ENCODE measurements at regions of chr3 and their contacts with region 1.

Region 1: DNA sequence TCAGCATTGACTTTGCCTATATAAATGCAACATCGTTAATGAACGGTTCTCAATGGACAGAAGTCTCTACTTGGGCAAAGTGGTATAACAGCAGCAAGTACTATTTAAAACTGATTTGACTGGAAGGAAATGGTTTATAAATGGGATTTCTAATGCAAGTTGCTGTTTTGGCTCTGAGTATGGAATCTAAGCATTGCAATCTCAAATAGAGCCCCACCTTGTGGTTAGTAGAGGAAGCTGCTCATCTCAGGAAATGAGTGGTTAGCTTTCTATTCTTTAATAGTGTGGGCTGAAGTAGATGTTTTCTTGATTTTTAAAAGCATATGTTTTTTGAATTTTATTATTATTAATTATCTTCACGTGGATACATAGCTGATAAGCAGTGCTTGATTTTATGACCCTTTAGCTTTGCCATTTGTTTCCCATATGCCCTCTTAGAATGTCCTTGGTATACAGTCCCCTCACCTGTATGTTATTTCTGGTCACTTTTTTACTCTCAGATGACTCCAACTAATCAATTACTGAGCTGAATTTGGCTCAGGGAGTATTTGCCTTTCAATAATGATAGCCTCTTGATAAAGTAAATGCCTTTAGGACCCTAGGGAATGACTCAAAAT is 67.1 kb downstream of the OXSM start:
- DNase-seq: no peak
- ATAC-seq: peak; percentile 76
- H3K4me3 Mint-ChIP-seq: no peak overlapping the region
- H3K27ac Mint-ChIP-seq: no peak overlapping the region
- H3K4me1 Mint-ChIP-seq: peaks cover 8% of the 10 kb centered on the region
- H3K27me3 Mint-ChIP-seq: peaks cover 9% of the 10 kb centered on the region

Region 2: GRCh38 chr3:25573386-25574171 is 283.4 kb before region 1 on chr3:
- CTCF ChIA-PET with region 1: no interaction called
- DNase-seq: no peak
- ATAC-seq: no peak
- H3K4me3 Mint-ChIP-seq: no peak overlapping the region
- H3K27ac Mint-ChIP-seq: no peak overlapping the region
- H3K4me1 Mint-ChIP-seq: no peaks in the 10 kb centered on the region
- H3K27me3 Mint-ChIP-seq: peaks cover 3% of the 10 kb centered on the region

Region 3: DNA sequence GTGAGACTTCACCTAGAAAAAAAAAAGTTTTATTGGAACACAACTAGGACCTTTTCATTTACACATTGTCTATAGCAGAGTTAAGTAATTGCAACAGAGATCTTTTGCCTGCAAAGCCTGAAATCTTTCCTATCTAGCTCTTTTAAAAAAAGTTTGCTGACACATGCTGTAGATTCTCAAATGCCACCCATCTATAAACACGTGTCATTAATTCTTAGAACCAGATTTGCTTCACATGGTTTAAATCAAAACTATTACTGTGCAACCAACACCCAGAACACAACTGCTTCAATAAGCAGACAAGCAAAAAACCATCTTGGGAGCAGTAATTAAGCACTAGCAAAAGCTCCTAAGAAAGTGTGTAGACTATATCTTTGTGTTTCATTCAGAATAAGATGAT is 12.1 kb before region 1 on chr3:
- CTCF ChIA-PET with region 1: interaction called, 11 read pairs
- DNase-seq: no peak
- ATAC-seq: no peak
- H3K4me3 Mint-ChIP-seq: no peak overlapping the region
- H3K27ac Mint-ChIP-seq: no peak overlapping the region
- H3K4me1 Mint-ChIP-seq: no peaks in the 10 kb centered on the region
- H3K27me3 Mint-ChIP-seq: peaks cover 9% of the 10 kb centered on the region

Measured in activated CD8-positive, alpha-beta memory T cell treated with anti-CD3 and anti-CD28 coated beads, Interleukin-2, amount 10 ng/mL, durations not matched to agents 7 days and 5 days (primary cell).